A549 (cell line): ENCODE measurements at regions of chr2 and their contacts with region 1.

Region 1: DNA sequence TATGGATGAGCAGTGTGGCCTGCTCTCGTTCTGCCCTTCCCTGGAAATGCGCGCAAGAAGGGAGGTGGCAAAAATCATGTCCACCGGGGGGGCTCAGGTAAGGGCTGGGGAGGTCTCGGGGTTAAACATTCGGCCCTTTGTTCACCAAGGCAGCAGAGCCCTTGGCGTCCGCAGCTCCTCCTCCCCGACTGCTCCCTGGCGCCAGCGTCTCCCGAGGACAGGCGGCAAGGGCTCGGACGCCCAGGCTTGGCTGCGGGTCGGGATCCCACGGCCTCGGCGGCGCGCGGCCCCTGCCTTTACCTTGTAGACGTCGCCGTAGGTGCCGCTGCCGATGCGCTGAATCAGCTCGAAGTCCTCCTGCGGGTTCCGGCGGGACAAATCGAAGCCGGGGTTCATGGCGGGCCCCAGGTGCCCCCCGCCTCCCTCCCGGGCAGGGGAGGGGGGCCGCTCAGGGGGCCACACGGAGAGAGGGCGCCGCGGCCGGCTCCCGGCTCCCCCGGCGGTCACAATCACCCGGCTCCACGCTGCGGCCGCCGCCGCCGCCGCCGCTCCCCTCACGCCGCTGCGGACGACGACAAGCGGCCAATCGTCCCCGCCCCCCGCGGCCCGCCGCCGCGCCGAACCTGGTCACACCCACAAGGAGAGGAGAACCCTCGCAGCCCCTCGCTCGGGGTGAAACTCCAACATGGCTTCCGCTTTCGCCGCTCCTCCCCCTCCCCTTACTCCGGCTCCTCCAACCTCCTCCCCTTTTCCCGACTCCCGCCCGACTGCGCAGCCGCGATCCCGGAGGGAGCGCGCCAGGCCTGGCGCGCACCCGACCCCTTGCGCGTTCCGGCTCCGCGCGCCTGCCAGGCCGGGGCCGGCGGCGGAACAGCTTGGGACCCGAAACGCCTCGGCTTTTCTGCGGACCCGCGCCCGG is at the start of gene MAP4K3:
- DNase-seq: peak; percentile 90 to 97
- ATAC-seq: peak; percentile 89
- H3K4me3 ChIP-seq: peak within 1 kb of the TSS; percentile 74
- H3K27ac ChIP-seq: peak within 1 kb of the TSS; percentile 94 to 96
- H3K4me1 ChIP-seq: peaks cover 56% of the 10 kb centered on the region
- CTCF ChIP-seq: no peak
- EP300 ChIP-seq: no peak
- POLR2A ChIP-seq: peak; percentile 71
- RAD21 ChIP-seq: peak in 1 of 2 experiments; percentile 23; a peak in 2 of 5 replicates
- polyA plus RNA-seq, gene MAP4K3: 44.2 and 44.6 TPM in 2 replicates

Region 2: DNA sequence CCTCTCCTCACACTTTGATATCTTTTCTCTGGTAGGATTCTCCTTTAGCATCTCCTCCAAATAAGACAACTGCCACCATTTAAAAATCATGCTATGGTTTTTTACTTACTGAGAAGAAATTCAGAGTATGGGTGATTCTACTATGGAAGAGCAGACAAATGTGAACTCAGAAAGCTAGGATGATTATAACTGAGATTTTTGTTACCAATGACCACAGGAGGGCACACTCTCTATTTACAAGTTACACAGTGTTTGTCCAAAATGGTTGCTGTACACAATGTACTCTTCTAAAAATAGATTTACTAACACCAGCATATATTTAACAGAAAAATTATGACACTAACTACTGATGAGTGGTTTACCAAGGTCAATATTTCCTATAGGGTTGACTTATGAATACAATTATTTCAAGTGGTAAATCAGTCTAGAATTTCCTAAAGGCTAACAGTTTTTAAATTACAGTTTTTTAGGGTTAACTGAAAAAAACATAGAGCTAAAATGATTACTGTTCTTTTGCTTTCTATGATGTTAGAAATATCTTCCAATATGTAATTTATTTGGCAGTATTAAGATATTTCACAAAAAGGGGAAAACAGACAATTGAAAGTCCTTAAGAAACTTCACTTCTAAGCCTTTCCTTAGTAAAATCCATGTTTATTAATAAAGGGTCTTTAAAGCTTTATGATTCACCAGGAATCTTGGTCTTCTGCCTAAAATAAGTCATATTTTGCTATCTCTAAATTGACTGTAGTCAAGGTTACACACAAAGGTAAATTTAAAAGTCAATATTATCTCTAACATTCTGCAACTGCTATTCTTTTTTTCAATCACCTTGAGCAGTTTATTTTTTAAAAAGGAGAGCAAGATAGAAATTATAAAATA is 57.0 kb before region 1 on chr2:
- CTCF ChIA-PET with region 1: interaction called, 19 read pairs
- POLR2A ChIA-PET with region 1: no interaction called
- DNase-seq: peak; percentile 26 to 71
- ATAC-seq: peak; percentile 88 to 91; a peak in 5 of 6 replicates
- H3K4me3 ChIP-seq: no peak overlapping the region
- H3K27ac ChIP-seq: peak overlapping the region in 1 of 2 experiments; percentile 42; a peak in 1 of 6 replicates
- H3K4me1 ChIP-seq: peaks cover 27% of the 10 kb centered on the region
- CTCF ChIP-seq: peak; percentile 96
- EP300 ChIP-seq: no peak
- POLR2A ChIP-seq: no peak
- RAD21 ChIP-seq: peak; percentile 86 to 93

Region 3: GRCh38 chr2:39469807-39470206 is 33.0 kb after region 1 on chr2:
- CTCF ChIA-PET with region 1: interaction called, 3 read pairs
- POLR2A ChIA-PET with region 1: interaction called, 13 read pairs
- DNase-seq: peak in 1 of 2 experiments; percentile 26
- ATAC-seq: peak; percentile 86 to 93
- H3K4me3 ChIP-seq: no peak overlapping the region
- H3K27ac ChIP-seq: peak overlapping the region; percentile 61 to 77
- H3K4me1 ChIP-seq: peaks cover 49% of the 10 kb centered on the region
- CTCF ChIP-seq: no peak
- EP300 ChIP-seq: no peak
- POLR2A ChIP-seq: no peak
- RAD21 ChIP-seq: no peak